ENCODE measurements at regions of chr10 and their contacts with region 1.

Region 1: DNA sequence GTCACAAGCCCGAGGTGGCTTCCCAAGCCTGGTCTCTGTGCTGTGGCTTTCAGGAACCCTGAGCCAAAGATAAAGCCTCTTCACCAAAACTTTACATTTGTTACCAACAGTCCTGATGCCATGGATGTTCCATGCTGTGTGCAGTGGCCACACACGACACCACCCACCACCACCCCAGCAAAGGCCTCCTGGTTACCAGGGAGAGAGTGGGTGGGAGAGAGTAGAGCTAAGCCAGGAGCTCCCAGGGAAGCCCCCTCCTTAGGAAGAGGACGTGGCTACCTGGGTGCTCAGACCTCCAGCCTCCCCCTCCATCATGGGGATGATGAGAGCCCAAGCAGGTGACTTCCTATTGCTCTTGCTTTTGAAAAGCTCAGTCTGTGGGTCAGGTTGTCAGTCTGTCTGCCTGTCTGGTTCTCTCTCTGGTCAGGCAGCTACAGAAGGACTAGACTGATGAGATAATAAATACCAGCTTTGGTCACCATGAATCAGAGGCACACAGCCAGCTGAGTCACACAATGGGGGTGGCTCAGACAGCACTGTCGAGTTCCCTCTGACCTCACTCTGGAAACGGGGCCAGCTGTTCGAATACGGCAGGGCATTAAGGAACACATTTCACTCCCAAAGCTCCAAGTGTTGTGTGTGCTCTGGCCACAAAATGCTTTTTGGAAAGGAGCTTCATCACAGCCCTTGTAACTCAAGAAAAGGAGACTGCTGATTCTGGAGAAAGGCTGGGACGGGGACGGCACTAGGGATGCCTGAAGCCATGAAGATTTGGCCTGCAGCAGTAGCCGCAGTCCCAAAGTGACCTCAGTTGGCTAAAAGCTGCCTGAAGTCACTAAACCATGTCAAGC is 166.0 kb downstream of the FANK1 start:
- DNase-seq: peak; percentile 97
- H3K4me3 ChIP-seq: no peak overlapping the region
- H3K27ac ChIP-seq: peak overlapping the region; percentile 69
- H3K4me1 ChIP-seq: peaks cover 55% of the 10 kb centered on the region
- H3K27me3 ChIP-seq: no peaks in the 10 kb centered on the region
- CTCF ChIP-seq: no peak

Region 2: DNA sequence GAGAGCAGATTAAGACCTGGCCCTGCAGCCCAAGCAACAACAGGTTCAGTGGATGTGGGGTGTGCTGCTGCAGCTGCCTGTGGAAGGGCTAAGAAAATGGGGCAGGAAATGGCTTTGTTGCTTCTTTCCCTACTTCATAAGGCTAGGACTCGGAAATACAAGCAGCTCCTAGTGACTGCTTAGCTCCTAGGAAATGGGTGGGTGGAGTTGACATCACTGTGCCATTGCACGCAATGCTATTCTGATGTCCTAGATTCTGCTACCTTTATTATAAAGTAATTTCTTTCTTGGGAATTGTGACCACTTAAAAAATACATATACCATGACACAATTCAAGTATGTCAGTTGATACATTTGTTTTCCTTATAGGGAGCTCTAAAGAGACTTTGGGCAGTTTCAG is 10.2 kb before region 1 on chr10:
- CTCF ChIA-PET with region 1: no interaction called
- dilution Hi-C with region 1: no loop called
- in situ Hi-C with region 1: no loop called
- intact Hi-C with region 1: loop called (anchors 1 kb)
- DNase-seq: no peak
- H3K4me3 ChIP-seq: no peak overlapping the region
- H3K27ac ChIP-seq: no peak overlapping the region
- H3K4me1 ChIP-seq: peaks cover 21% of the 10 kb centered on the region
- H3K27me3 ChIP-seq: no peaks in the 10 kb centered on the region
- CTCF ChIP-seq: no peak

Region 3: DNA sequence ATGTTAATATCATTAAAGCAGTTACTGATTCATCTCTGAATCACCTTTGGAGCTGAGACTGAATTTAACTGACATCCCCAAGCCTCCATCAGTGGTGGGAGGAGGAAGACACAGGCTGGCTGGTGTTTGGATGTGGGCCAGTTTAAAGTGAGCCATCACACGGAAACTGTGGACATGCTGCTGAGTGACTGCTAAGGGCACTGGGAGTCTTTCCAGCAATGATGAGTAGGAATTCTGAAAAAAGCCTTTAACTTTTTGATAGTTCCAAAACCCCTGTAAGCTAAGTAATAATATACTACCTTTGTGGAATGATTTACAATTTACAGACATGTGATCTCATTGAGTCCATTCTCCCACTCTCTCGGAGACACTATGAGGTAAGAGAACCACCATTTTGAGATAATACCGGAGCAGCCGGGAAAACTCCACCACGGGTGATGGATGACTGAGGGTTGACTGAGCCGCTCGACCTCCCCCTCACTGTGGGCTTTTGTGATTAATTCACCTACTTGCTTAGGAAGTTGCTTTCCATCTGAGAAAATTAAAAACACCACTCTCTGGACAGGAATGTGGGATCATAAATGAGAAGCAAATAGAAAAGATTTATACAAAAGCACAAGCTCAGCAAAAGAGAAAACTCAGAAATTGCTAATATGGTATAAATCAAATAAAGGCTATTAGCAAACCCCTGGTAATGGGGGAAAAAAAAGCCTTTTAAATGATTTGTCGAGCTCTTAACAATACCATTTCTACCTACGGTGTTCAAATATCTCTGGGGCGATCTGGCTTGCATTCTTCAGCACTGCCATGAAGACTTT is 28.8 kb after region 1 on chr10:
- CTCF ChIA-PET with region 1: no interaction called
- dilution Hi-C with region 1: no loop called
- in situ Hi-C with region 1: no loop called
- intact Hi-C with region 1: loop called (anchors 1 kb)
- DNase-seq: peak; percentile 93
- H3K4me3 ChIP-seq: no peak overlapping the region
- H3K27ac ChIP-seq: peak overlapping the region; percentile 28
- H3K4me1 ChIP-seq: peaks cover 23% of the 10 kb centered on the region
- H3K27me3 ChIP-seq: no peaks in the 10 kb centered on the region
- CTCF ChIP-seq: no peak